T-cell (primary cell): ENCODE measurements at regions of chr3 and their contacts with region 1.

Region 1: DNA sequence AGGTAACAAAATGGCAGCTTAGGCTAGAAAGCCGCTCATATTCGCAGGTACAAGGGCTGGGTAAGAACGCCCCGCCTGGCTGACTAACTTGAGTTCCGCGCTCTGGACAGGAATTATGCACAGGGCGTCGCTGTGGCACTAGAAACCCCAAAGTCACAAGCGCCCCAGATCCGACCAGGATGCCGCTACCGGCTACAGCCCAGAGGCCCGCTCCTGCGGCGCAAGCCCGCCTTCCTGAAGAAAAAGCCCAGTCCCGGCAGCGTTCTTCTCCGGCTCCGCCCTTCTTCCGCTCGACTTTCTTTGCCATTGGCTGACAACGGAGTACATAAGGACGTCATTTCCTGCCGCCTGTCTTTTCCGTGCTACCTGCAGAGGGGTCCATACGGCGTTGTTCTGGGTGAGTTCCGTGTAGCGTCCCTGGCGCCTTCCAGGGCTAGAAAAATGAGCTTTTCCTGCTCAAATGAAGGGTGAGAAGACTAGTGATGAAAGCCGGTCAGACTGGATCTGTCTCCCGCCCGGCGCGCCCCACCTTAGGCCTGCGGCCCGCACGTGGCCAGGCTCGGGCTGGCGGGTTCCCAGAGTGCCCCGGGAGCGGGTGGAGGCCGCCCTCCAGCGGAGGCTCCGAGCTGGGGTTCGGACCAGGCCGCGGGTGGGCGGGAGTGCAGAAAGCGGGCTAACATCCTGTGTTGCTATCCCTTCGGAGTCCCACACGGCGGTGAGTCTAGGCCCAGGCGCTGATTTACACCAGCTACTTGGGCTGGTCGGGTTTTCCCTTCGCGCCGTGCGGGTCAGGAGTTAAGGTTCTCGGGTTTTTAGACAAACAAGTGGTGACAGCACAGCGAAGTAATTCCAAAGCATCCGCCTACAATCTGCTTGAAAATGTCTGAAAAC is at the start of gene RPSA:
- DNase-seq: peak; percentile 86 to 99 (median 96)
- ATAC-seq: peak; percentile 93 to 94 (median 94)
- H3K4me3 ChIP-seq: peak within 1 kb of the TSS; percentile 72 to 74
- H3K4me3 Mint-ChIP-seq: peak within 1 kb of the TSS; percentile 89 to 90 (median 90)
- H3K27ac ChIP-seq: peak within 1 kb of the TSS; percentile 68
- H3K27ac Mint-ChIP-seq: peak within 1 kb of the TSS; percentile 93 to 95
- H3K4me1 ChIP-seq: peaks cover 16 to 36% of the 10 kb centered on the region in 2 experiments
- H3K4me1 Mint-ChIP-seq: peaks cover 49 to 58% (median 51%) of the 10 kb centered on the region in 3 donors
- H3K27me3 ChIP-seq: no peaks in the 10 kb centered on the region
- H3K27me3 Mint-ChIP-seq: no peaks in the 10 kb centered on the region
- total RNA-seq, gene RPSA: 1,722 to 2,107 (median 1,965) TPM

Region 2: DNA sequence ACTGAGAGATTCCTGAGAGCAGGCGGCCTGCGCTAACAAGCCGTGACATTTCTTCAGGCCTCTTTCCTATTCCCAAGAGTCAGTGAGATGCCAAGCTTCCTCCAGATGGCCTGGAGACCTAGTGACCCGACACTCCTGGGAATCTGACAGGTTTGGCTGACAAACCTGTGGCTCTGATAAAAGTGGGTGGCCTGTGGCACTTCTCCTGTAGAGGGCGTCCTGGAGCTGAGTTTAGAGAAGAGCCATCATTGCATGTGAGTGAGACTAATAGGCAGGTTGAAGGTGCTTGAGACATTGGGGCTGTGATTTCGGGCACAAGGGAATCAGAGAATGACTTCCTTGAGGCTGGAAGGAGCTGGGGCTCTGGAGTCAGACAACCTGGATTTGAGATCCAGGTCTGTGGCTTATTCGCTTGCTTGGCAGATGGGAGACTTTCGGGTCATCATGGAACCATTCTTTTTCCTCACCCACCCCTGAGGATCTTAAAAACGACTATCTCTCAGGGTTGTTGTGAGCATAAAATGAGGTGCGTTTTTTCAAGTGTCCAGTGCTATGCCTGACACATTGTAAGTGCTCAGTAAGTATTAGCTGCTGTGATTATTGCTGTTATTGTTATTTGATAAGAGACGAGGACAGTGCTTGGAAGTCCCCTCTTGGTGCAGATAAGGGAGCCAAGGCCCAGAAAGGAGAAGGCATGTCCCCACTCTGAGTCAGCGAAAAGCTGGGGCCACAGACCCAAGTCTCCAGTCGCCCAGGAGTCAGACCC is 667.8 kb before region 1 on chr3:
- CTCF ChIA-PET with region 1: no interaction called
- POLR2A ChIA-PET with region 1: no interaction called
- DNase-seq: peak in 2 of 35 experiments; percentile 1 to 4
- ATAC-seq: no peak
- H3K4me3 ChIP-seq: no peak overlapping the region
- H3K4me3 Mint-ChIP-seq: no peak overlapping the region
- H3K27ac ChIP-seq: no peak overlapping the region
- H3K27ac Mint-ChIP-seq: no peak overlapping the region
- H3K4me1 ChIP-seq: no peaks in the 10 kb centered on the region
- H3K4me1 Mint-ChIP-seq: peaks cover 0 to 5% (median 0%) of the 10 kb centered on the region in 3 donors
- H3K27me3 ChIP-seq: peaks cover 0 to 21% of the 10 kb centered on the region in 2 experiments
- H3K27me3 Mint-ChIP-seq: peaks cover 13 to 34% of the 10 kb centered on the region in 2 donors

Region 3: GRCh38 chr3:39388741-39389248 is 17.8 kb before region 1 on chr3:
- CTCF ChIA-PET with region 1: interaction called in 1 of 2 experiments, 11 read pairs
- POLR2A ChIA-PET with region 1: interaction called, 4 to 6 read pairs
- DNase-seq: no peak
- ATAC-seq: no peak
- H3K4me3 ChIP-seq: no peak overlapping the region
- H3K4me3 Mint-ChIP-seq: peak overlapping the region in 2 of 3 donors; percentile 10 to 17
- H3K27ac ChIP-seq: peak overlapping the region; percentile 48
- H3K27ac Mint-ChIP-seq: peak overlapping the region; percentile 72 to 84
- H3K4me1 ChIP-seq: peaks cover 21 to 58% of the 10 kb centered on the region in 2 experiments
- H3K4me1 Mint-ChIP-seq: peaks cover 51 to 66% (median 62%) of the 10 kb centered on the region in 3 donors
- H3K27me3 ChIP-seq: no peaks in the 10 kb centered on the region
- H3K27me3 Mint-ChIP-seq: no peaks in the 10 kb centered on the region

Region 4: GRCh38 chr3:39447637-39448483 is 41.2 kb after region 1 on chr3:
- CTCF ChIA-PET with region 1: interaction called, 3 to 12 read pairs
- POLR2A ChIA-PET with region 1: interaction called in 1 of 2 experiments, 3 read pairs
- DNase-seq: peak in 33 of 35 experiments; percentile 9 to 86 (median 35)
- ATAC-seq: peak; percentile 74 to 79 (median 76)
- H3K4me3 ChIP-seq: no peak overlapping the region
- H3K4me3 Mint-ChIP-seq: no peak overlapping the region
- H3K27ac ChIP-seq: no peak overlapping the region
- H3K27ac Mint-ChIP-seq: no peak overlapping the region
- H3K4me1 ChIP-seq: peaks cover 2% of the 10 kb centered on the region in 2 experiments
- H3K4me1 Mint-ChIP-seq: peaks cover 0 to 4% (median 1%) of the 10 kb centered on the region in 3 donors
- H3K27me3 ChIP-seq: peaks cover 0 to 2% of the 10 kb centered on the region in 2 experiments
- H3K27me3 Mint-ChIP-seq: peaks cover 3 to 5% of the 10 kb centered on the region in 2 donors

Region 5: GRCh38 chr3:39531650-39532049 is 125.0 kb after region 1 on chr3:
- CTCF ChIA-PET with region 1: no interaction called
- POLR2A ChIA-PET with region 1: no interaction called
- DNase-seq: no peak
- ATAC-seq: no peak
- H3K4me3 ChIP-seq: no peak overlapping the region
- H3K4me3 Mint-ChIP-seq: no peak overlapping the region
- H3K27ac ChIP-seq: no peak overlapping the region
- H3K27ac Mint-ChIP-seq: no peak overlapping the region
- H3K4me1 ChIP-seq: no peaks in the 10 kb centered on the region
- H3K4me1 Mint-ChIP-seq: no peaks in the 10 kb centered on the region
- H3K27me3 ChIP-seq: peaks cover 0 to 8% of the 10 kb centered on the region in 2 experiments
- H3K27me3 Mint-ChIP-seq: peaks cover 17 to 30% of the 10 kb centered on the region in 2 donors

Region 6: DNA sequence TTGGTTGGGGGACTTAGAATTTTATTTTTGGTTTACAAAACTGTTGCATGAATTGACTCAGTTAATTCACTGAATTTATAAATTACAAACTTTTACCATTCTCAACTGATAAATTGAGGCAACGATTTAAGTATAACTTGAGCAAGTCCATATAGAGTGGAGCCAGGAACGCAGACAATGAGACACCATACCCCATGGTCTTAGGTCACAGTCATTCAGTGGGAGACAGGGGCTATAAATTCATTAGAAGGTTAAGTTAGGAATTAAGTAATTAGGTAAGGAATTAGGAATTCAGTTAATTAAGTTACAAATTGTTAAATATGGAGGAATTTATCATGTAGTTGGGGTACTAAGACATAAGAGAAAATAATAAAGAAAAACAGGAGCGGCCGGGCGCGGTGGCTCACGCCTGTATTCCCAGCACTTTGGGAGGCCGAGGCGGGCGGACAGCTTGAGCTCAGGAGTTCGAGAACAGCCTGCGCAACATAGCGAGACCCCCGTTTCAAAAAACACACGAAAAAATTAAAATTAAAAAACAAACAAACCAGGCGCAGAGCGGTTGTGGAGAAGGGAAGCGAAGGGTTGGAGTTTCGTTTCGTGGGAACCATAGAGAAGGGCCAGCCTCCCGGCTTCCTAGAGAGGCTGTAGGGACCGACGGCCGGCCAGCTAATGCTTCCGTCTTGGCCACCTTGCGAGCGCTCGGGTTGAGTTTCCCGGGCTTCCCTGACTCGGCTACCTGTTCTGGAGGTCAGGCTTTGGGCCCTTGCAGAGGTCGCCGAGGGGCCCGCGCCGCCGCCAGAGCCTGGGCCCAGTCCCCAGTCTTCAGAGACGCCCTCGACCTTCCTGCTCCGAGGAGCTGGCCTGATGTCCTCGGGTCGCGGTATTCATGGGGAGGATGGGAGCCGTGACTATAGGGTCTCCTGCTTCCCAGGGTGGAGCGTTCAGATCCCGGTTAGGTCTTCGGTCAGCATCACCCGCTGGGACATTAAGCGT is 1070.2 kb after region 1 on chr3 and contains the start of gene ZNF619:
- CTCF ChIA-PET with region 1: no interaction called
- POLR2A ChIA-PET with region 1: interaction called in 1 of 2 experiments, 12 read pairs
- DNase-seq: peak in 34 of 35 experiments; percentile 8 to 73 (median 40)
- ATAC-seq: peak; percentile 83 to 87 (median 86)
- H3K4me3 ChIP-seq: peak within 1 kb of the TSS; percentile 87 to 88
- H3K4me3 Mint-ChIP-seq: peak within 1 kb of the TSS; percentile 89 to 92 (median 91)
- H3K27ac ChIP-seq: peak within 1 kb of the TSS; percentile 80
- H3K27ac Mint-ChIP-seq: peak within 1 kb of the TSS; percentile 79 to 95
- H3K4me1 ChIP-seq: peaks cover 0 to 20% of the 10 kb centered on the region in 2 experiments
- H3K4me1 Mint-ChIP-seq: peaks cover 21 to 28% (median 28%) of the 10 kb centered on the region in 3 donors
- H3K27me3 ChIP-seq: no peaks in the 10 kb centered on the region
- H3K27me3 Mint-ChIP-seq: no peaks in the 10 kb centered on the region
- total RNA-seq, gene ZNF619: 7.3 to 12.2 (median 11.2) TPM